ENCODE measurements at regions of chr1 and their contacts with region 1.

Region 1: GRCh38 chr1:56295949-56296929 is 283.1 kb downstream of the PLPP3 start:
- DNase-seq: no peak
- ATAC-seq: no peak
- H3K4me3 ChIP-seq: no peak overlapping the region
- H3K4me3 Mint-ChIP-seq: no peak overlapping the region
- H3K27ac ChIP-seq: no peak overlapping the region
- H3K27ac Mint-ChIP-seq: no peak overlapping the region
- H3K4me1 ChIP-seq: no peaks in the 10 kb centered on the region
- H3K4me1 Mint-ChIP-seq: no peaks in the 10 kb centered on the region
- H3K27me3 ChIP-seq: no peaks in the 10 kb centered on the region
- H3K27me3 Mint-ChIP-seq: no peaks in the 10 kb centered on the region
- CTCF ChIP-seq: no peak

Region 2: DNA sequence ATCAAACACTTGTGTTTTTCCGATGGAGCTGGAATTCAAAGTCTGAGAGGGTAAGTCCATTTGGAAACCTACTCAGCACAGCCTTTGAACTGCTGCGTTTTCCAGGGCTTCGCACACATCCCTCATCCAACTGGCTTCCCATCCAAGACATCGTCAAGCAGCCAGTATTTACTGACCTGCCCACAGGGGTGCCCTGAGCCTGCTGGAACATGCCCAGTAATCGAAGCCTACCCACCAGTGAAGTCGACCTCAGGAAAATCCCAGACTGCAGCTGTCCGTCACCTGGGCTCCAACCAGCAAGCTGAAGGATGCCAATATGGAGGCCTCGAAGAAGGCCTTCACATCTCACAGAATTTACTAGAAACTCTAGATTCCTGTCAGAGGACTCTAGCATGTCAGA is 21.5 kb after region 1 on chr1:
- CTCF ChIA-PET with region 1: no interaction called
- POLR2A ChIA-PET with region 1: no interaction called
- intact Hi-C with region 1: loop called in 1 of 2 experiments (anchors 2 kb)
- DNase-seq: no peak
- ATAC-seq: no peak
- H3K4me3 ChIP-seq: no peak overlapping the region
- H3K4me3 Mint-ChIP-seq: no peak overlapping the region
- H3K27ac ChIP-seq: no peak overlapping the region
- H3K27ac Mint-ChIP-seq: no peak overlapping the region
- H3K4me1 ChIP-seq: no peaks in the 10 kb centered on the region
- H3K4me1 Mint-ChIP-seq: no peaks in the 10 kb centered on the region
- H3K27me3 ChIP-seq: no peaks in the 10 kb centered on the region
- H3K27me3 Mint-ChIP-seq: no peaks in the 10 kb centered on the region
- CTCF ChIP-seq: no peak

Measured in CD4-positive, alpha-beta T cell (primary cell).